ENCODE measurements at regions of chr4 and their contacts with region 1.

Region 1: DNA sequence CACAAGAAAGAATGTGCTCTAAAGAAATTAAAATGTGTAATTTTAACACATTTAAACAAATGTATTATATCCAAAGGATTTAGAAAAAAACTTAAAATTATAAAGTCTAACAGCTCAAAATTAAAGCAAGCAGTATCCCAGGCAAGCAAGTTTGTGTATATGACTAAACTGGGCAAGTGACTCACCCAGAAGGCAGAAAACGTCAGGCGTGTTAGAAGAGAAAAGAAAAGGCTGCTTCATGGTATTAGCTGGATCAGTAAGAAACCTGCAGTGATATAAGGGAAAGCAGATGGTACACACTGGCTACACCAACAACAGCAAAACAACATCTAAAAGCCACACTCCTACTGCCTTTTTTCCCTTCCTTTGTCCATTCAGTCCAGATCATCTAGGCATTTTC is 250.6 kb upstream of the NDST3 start:
- DNase-seq: peak; percentile 48
- H3K4me3 Mint-ChIP-seq: no peak overlapping the region
- H3K27ac Mint-ChIP-seq: no peak overlapping the region
- H3K4me1 Mint-ChIP-seq: peaks cover 10% of the 10 kb centered on the region
- H3K27me3 Mint-ChIP-seq: no peaks in the 10 kb centered on the region
- CTCF ChIP-seq: no peak

Region 2: DNA sequence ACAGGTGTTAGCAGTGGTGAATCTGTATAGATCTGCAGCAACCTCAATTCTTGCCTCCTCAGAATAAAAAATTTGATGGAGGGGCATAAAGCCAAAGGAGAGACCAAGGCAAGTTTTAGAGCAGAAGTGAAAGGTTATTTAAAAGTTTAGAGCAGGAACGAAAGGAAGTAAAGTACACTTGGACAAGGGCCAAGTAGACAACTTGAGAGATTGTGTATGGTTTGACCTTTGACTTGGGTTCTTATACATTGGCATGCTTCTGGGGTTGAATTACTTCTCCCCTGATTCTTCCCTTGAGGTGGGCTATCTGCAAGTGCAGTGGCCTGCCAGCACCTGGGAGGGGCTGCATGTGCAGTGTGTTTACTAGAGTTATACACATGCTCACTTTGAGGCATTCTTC is 28.3 kb before region 1 on chr4:
- CTCF ChIA-PET with region 1: no interaction called
- POLR2A ChIA-PET with region 1: no interaction called
- intact Hi-C with region 1: no loop called
- DNase-seq: no peak
- H3K4me3 Mint-ChIP-seq: no peak overlapping the region
- H3K27ac Mint-ChIP-seq: no peak overlapping the region
- H3K4me1 Mint-ChIP-seq: no peaks in the 10 kb centered on the region
- H3K27me3 Mint-ChIP-seq: no peaks in the 10 kb centered on the region
- CTCF ChIP-seq: no peak

Region 3: GRCh38 chr4:117793845-117794480 is 10.2 kb after region 1 on chr4:
- CTCF ChIA-PET with region 1: no interaction called
- POLR2A ChIA-PET with region 1: interaction called, 11 read pairs
- intact Hi-C with region 1: no loop called
- DNase-seq: peak; percentile 55
- H3K4me3 Mint-ChIP-seq: no peak overlapping the region
- H3K27ac Mint-ChIP-seq: peak overlapping the region; percentile 37
- H3K4me1 Mint-ChIP-seq: peaks cover 15% of the 10 kb centered on the region
- H3K27me3 Mint-ChIP-seq: no peaks in the 10 kb centered on the region
- CTCF ChIP-seq: no peak